ENCODE measurements at regions of chr17 and their contacts with region 1.

Region 1: GRCh38 chr17:56499799-56500388 is 93.6 kb upstream of the NOG start:
- DNase-seq: peak; percentile 24
- ATAC-seq: no peak
- H3K4me3 ChIP-seq: no peak overlapping the region
- H3K27ac ChIP-seq: no peak overlapping the region
- H3K4me1 ChIP-seq: no peaks in the 10 kb centered on the region
- H3K27me3 ChIP-seq: no peaks in the 10 kb centered on the region
- CTCF ChIP-seq: peak; percentile 33; the same call in 1 of the 2 replicates
- EP300 ChIP-seq: no peak
- POLR2A ChIP-seq: no peak
- RAD21 ChIP-seq: no peak

Region 2: GRCh38 chr17:56510554-56511342 is 10.9 kb after region 1 on chr17:
- CTCF ChIA-PET with region 1: no interaction called
- POLR2A ChIA-PET with region 1: no interaction called
- in situ Hi-C with region 1: no loop called
- intact Hi-C with region 1: no loop called
- DNase-seq: no peak
- ATAC-seq: no peak
- H3K4me3 ChIP-seq: no peak overlapping the region
- H3K27ac ChIP-seq: no peak overlapping the region
- H3K4me1 ChIP-seq: no peaks in the 10 kb centered on the region
- H3K27me3 ChIP-seq: no peaks in the 10 kb centered on the region
- CTCF ChIP-seq: no peak
- EP300 ChIP-seq: no peak
- POLR2A ChIP-seq: no peak
- RAD21 ChIP-seq: no peak

Region 3: GRCh38 chr17:56679115-56679766 is 179.3 kb after region 1 on chr17:
- CTCF ChIA-PET with region 1: no interaction called
- POLR2A ChIA-PET with region 1: no interaction called
- in situ Hi-C with region 1: no loop called
- intact Hi-C with region 1: loop called (anchors 10 kb)
- DNase-seq: peak; percentile 15
- ATAC-seq: peak; percentile 87
- H3K4me3 ChIP-seq: no peak overlapping the region
- H3K27ac ChIP-seq: no peak overlapping the region
- H3K4me1 ChIP-seq: 0 out of 2 replicates have a peak, but pooled peaks cover 4% of the 10 kb centered on the region
- H3K27me3 ChIP-seq: peaks cover 5 to 41% of the 10 kb centered on the region in 2 experiments; a peak in 4 of 5 replicates
- CTCF ChIP-seq: peak; percentile 60
- EP300 ChIP-seq: no peak
- POLR2A ChIP-seq: no peak
- RAD21 ChIP-seq: no peak